OCI-LY7 (cell line): ENCODE measurements at regions of chr7 and their contacts with region 1.

Region 1: DNA sequence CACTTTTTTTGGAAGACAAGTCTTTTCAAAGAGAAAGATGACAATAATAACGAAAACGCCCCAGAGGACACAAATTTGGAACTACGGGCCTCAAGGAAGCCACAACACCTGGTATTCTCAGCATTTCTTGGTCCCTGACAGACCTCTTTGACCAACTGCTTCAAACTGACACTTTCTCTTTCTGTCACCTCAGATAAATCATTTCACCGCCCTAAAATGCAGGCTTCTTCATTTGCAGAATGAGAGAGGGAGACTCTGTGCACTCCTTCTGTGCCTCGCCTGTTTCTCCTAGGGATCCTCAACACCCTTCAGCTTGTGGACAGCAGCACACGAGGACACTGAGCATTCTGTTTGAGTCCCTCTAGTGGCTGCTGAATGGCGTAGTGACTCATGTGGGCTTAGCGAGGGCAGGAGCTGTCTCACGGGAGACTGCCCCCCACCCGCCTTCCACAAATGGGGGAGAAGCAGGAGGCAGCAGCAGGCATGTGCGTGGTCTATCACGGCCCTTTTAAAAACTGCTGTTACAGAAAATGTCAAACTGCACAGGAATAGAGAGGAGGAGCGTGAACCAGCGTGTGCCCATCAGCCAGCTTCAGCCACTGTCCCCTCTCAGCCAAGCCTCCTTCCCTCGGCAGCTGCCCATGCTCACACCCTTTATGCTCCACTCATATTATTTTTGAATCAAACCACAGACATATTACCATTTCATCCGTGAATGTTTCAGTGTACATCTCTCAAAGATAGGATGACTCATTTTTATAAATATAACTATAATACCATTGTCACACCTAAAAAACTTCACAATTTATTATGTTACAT is 41.4 kb downstream of the GSDME start:
- DNase-seq: peak; percentile 90
- H3K4me3 ChIP-seq: peak overlapping the region; percentile 53
- H3K27ac ChIP-seq: peak overlapping the region; percentile 93
- H3K4me1 ChIP-seq: peaks cover 75% of the 10 kb centered on the region
- CTCF ChIP-seq: peak; percentile 69

Region 2: DNA sequence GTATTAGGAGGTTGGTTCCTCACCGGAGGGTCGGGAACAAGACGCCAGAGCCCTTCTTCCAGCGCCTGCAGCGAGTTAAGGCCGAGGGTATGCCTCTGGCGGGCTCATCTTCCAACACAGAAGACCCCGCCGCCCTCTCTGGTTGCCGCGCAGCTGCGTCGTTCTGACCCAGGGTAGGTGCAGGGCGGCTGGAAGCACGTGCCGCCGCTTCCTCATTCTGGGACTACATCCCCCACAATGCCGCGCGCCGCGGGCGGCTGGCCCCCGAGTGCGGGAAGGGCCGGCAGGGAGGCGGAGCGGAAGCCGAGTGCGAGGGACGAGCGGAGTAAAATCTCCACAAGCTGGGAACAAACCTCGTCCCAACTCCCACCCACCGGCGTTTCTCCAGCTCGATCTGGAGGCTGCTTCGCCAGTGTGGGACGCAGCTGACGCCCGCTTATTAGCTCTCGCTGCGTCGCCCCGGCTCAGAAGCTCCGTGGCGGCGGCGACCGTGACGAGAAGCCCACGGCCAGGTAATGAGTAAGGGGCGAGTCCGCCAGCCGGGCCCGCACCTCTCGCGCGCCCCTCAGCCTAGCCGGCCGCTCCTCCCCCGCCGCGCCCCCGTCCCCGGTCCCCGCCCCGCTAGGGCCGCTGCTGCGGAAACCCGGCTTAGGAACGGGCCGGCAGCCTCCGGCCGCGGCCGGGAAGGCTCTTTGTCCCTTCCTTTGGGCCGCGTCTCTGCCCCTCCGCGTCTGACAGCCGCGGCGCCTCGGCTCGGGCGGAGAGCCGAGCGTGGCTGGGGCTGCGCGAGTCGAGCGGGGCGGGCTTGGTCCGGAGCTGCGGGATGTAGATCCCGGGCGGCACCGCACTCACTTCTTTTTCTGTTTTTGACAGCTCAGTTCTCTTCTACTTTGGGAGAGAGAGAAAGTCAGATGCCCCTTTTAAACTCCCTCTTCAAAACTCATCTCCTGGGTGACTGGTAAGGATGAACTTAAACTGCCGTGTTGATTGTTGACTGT is 1118.5 kb before region 1 on chr7 and contains the start of gene CCDC126:
- CTCF ChIA-PET with region 1: no interaction called
- POLR2A ChIA-PET with region 1: no interaction called
- intact Hi-C with region 1: loop called (anchors 5 kb)
- DNase-seq: peak; percentile 91
- H3K4me3 ChIP-seq: peak within 1 kb of the TSS; percentile 83
- H3K27ac ChIP-seq: peak within 1 kb of the TSS; percentile 46
- H3K4me1 ChIP-seq: peaks cover 63% of the 10 kb centered on the region
- CTCF ChIP-seq: no peak
- total RNA-seq, gene CCDC126: 9.6 and 11.9 TPM in 2 replicates

Region 3: GRCh38 chr7:24572997-24573625 is 142.8 kb before region 1 on chr7 and contains the start of gene PALS2:
- CTCF ChIA-PET with region 1: interaction called, 6 read pairs
- POLR2A ChIA-PET with region 1: no interaction called
- intact Hi-C with region 1: loop called (anchors 2 kb)
- DNase-seq: peak; percentile 88
- H3K4me3 ChIP-seq: peak within 1 kb of the TSS; percentile 96
- H3K27ac ChIP-seq: peak within 1 kb of the TSS; percentile 64
- H3K4me1 ChIP-seq: peaks cover 36% of the 10 kb centered on the region
- CTCF ChIP-seq: no peak
- total RNA-seq, gene PALS2: 26.3 and 45.1 TPM in 2 replicates

Region 4: DNA sequence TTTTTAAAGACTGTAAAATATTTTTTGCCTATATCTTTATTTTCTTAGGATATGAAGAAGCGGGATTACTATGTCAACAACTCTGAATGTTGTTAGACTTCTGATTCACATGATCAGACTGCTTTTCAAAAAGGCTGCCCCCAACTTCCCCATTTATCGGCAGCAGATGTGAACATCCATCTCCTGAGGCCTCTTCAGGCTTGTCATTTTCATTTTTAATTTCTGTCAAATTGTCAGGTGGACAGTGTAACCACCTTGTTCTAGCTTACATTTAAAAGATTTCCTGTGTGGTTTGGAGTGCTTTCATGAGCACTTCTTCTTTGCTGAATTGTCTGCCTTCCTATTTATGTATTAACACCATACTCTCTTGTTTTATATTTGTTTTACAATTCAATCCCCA is 120.2 kb after region 1 on chr7:
- CTCF ChIA-PET with region 1: no interaction called
- POLR2A ChIA-PET with region 1: interaction called, 4 read pairs
- intact Hi-C with region 1: loop called (anchors 5 kb)
- DNase-seq: peak; percentile 93
- H3K4me3 ChIP-seq: peak overlapping the region; percentile 34
- H3K27ac ChIP-seq: peak overlapping the region; percentile 95
- H3K4me1 ChIP-seq: peaks cover 89% of the 10 kb centered on the region
- CTCF ChIP-seq: no peak

Region 5: GRCh38 chr7:25093268-25093826 is 377.5 kb after region 1 on chr7:
- CTCF ChIA-PET with region 1: no interaction called
- POLR2A ChIA-PET with region 1: interaction called, 7 read pairs
- intact Hi-C with region 1: loop called (anchors 2 kb)
- DNase-seq: peak; percentile 86
- H3K4me3 ChIP-seq: no peak overlapping the region
- H3K27ac ChIP-seq: no peak overlapping the region
- H3K4me1 ChIP-seq: peaks cover 41% of the 10 kb centered on the region
- CTCF ChIP-seq: peak; percentile 97